Activated CD4-positive, alpha-beta memory T cell treated with anti-CD3 and anti-CD28 coated beads for 36 hours (primary cell): ENCODE measurements at regions of chr5 and their contacts with region 1.

Region 1: DNA sequence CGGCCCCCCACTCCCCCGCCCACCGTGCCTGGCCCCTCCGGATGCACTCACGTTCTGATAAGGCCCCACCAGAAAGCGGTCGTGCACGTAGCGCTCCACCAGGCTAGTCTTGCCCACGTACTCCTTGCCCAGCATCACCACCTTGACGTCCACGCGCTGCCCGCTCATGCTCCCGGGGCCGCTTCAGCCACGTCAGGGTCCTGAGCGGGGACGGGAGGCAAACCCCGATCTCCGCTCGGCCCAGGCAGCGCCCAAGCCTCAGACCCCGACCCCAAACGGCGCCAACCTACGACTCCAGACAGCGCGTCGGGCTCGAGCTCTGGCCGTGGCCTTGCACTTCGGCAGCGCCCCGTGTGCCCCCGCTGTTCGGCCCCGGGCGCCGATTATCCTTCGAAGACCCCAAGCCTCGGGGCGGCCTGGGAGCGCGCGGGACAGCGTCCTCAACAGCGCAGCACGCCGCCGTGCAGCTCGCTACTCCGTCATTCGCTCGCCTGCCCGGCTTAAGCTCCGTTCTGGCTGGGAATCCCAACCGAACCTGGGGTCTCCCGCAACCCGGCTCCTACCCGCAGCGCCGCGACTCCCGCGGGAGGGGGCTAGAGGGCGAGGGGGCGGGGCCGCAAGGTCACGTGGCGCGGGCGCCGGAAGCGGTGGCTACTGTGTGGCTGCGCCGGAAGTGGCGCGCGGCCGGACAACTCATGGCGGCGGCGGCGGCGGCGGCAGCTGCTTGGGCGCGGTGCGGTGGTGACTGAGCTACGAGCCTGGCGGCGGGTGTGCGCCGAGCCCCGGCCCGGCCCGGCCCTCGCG is at the starts of genes PRELID1 and RAB24:
- DNase-seq: peak; percentile 94
- H3K4me3 Mint-ChIP-seq: peak within 1 kb of the TSS; percentile 96
- H3K27ac Mint-ChIP-seq: peak within 1 kb of the TSS; percentile 82
- H3K4me1 Mint-ChIP-seq: peaks cover 56% of the 10 kb centered on the region
- H3K27me3 Mint-ChIP-seq: no peaks in the 10 kb centered on the region
- total RNA-seq, gene PRELID1: 247 to 248 TPM
- total RNA-seq, gene RAB24: 21.7 to 22.1 TPM

Region 2: DNA sequence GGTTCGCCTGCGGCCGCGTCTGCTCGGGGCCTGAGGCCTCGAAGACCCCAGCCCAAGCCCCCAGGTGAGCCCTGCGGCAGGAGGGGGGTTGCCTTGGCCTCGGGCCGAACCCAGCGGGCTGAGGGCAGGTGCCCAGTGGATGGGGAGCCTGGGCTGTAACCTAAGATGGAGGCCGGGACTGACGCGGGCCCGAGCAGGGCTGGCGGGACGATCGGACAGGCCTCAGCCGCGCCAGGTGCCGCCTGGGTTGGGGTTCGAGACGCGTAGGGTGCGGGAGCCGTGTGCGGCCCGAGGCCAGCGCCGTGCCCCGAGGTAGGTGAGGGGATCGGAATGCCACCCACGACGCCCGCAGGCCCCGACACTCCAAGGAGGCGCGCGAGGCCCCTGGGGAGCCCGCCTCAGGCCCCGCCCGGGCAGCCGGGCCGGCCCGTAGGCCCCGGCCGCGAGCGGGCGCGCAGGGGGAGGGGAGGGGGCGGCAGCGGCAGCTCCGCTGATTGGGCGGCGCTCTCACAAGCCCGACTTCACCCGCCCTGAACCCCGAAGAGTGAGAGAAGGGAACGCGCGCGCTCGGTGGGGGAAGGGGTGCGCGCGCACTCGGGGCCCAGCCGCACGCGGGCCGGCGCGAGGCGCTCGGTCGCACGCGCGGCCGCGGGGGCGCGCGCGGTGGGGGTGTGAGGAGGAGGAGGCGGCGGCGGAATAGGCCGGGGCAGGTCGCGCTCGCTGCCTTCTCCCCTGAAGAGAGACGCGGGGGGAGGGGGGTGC is 170.1 kb before region 1 on chr5 and contains the start of gene NSD1:
- CTCF ChIA-PET with region 1: interaction called, 5 read pairs
- POLR2A ChIA-PET with region 1: interaction called, 3 read pairs
- intact Hi-C with region 1: loop called (anchors 5 kb)
- DNase-seq: peak; percentile 93
- H3K4me3 Mint-ChIP-seq: peak within 1 kb of the TSS; percentile 90
- H3K27ac Mint-ChIP-seq: peak within 1 kb of the TSS; percentile 89
- H3K4me1 Mint-ChIP-seq: peaks cover 46% of the 10 kb centered on the region
- H3K27me3 Mint-ChIP-seq: no peaks in the 10 kb centered on the region
- total RNA-seq, gene NSD1: 54.6 to 55.5 TPM

Region 3: DNA sequence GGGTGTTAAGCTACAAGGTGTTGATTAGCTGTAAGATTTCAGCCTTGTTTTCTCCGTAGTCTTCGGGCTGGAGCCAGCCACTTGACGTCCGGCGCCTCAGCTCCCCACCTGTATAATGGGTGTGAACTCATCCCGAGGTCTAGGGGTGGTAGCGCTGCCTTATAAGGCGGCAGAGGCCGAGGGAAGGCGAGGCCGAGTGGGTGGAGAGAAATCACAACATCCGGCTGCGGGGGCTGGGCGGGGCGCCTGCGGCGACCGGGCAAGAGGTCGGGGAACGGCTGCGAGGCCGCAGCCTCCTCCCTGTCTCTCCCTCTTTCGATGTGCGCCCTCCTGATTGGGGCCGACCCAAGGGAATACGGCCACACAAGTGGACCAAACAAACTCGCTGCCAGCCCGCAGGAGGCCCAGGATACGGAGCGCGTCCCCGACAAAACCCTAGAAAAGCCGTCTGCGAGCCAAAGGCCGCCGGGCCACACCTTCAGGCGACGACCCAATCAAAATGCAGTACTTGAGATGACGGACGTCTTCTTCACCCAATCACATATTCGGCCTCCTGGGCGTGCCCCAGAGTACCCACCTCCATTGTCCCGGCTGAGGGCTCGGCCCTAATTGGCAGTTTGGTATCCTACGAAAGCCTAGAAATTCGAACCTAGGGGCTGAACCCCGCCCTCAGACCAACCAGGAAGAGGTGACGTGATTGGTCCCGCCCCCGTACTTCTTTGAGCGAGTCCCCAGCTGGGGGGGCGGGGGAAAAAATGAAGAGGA is 122.7 kb after region 1 on chr5:
- CTCF ChIA-PET with region 1: no interaction called
- POLR2A ChIA-PET with region 1: no interaction called
- intact Hi-C with region 1: no loop called
- DNase-seq: peak; percentile 100
- H3K4me3 Mint-ChIP-seq: peak overlapping the region; percentile 87
- H3K27ac Mint-ChIP-seq: peak overlapping the region; percentile 94
- H3K4me1 Mint-ChIP-seq: peaks cover 35% of the 10 kb centered on the region
- H3K27me3 Mint-ChIP-seq: no peaks in the 10 kb centered on the region